ENCODE measurements at regions of chr7 and their contacts with region 1.

Region 1: DNA sequence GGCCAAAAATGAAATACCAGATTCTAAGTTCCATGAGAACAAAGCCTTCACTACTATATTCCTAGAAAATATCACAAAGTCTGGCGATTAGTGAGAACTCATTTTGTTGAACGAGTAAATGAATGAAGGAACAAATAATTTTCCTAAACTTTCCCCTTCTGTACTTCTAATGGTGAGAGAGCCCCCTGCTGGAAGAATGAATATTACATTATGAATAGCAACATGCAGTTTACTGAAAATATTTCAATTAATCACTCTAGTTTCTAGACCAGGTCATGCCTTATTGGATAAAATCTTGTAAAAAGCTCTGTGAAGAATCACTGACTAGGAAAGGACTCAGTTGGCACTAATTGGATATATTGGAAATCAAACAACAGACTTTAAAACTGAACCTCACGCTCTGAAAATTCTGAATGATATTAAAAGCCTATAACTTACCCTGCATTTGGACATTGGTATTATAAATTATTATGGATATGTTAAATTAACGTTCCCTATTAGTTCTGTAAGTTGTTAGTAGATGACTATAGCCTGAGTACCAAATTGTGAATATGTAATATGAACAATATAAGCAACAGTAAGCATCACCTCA is 32.4 kb upstream of the MTPN start:
- DNase-seq: no peak
- H3K4me3 ChIP-seq: no peak overlapping the region
- H3K27ac ChIP-seq: no peak overlapping the region
- H3K4me1 ChIP-seq: peaks cover 4% of the 10 kb centered on the region
- H3K27me3 ChIP-seq: no peaks in the 10 kb centered on the region
- CTCF ChIP-seq: peak; percentile 83

Region 2: GRCh38 chr7:135801045-135801693 is 208.4 kb before region 1 on chr7:
- intact Hi-C with region 1: loop called (anchors 2 kb)
- DNase-seq: no peak
- H3K4me3 ChIP-seq: peak overlapping the region; percentile 14
- H3K27ac ChIP-seq: no peak overlapping the region
- H3K4me1 ChIP-seq: peaks cover 26% of the 10 kb centered on the region
- H3K27me3 ChIP-seq: no peaks in the 10 kb centered on the region
- CTCF ChIP-seq: peak; percentile 91

Region 3: DNA sequence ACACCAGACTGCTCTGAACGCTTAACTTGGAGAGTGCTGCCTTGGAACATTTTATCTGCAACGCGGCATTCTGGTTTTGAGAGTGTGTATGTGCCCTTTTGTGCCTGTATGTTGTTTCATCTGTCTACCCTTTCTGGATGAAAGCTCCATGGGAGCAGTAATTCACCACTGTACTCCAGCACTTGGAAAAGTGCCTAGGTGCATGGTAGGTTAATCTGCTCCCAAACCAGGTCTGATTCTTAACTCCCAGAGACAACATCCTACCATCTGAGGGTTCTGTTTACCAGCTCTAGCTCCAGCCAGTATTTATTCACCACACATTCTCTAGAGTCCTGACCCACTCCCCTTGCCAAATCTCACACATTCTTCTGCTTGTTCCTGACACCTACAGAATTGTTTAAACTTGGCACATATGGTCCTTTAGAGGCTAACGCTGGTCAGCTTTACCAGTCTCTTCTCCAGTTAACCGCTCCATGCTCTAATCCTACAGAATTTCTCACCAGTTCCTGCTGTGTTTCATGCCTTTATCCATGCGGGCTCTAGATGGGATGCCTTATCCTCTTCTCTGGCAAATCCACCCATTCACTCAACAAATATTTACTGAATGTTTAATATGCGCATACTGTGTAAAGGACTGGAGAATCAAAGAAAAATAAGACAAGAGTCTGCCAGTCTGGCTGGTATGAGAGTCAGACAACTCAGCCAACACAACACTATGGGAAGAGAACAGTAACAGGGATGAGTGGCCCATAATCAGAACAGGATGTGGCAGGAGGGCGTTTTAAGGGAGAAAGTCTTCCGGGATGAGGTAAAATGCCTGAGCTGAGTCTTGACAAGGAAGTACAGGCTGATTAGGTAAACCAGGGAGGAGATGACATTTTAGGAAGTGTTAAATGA is 78.8 kb before region 1 on chr7:
- intact Hi-C with region 1: no loop called
- DNase-seq: no peak
- H3K4me3 ChIP-seq: peak overlapping the region; percentile 37
- H3K27ac ChIP-seq: peak overlapping the region; percentile 82
- H3K4me1 ChIP-seq: peaks cover 90% of the 10 kb centered on the region
- H3K27me3 ChIP-seq: no peaks in the 10 kb centered on the region
- CTCF ChIP-seq: no peak

Region 4: GRCh38 chr7:135970682-135971365 is 38.8 kb before region 1 on chr7:
- intact Hi-C with region 1: no loop called
- DNase-seq: no peak
- H3K4me3 ChIP-seq: no peak overlapping the region
- H3K27ac ChIP-seq: no peak overlapping the region
- H3K4me1 ChIP-seq: peaks cover 70% of the 10 kb centered on the region
- H3K27me3 ChIP-seq: no peaks in the 10 kb centered on the region
- CTCF ChIP-seq: no peak

Region 5: DNA sequence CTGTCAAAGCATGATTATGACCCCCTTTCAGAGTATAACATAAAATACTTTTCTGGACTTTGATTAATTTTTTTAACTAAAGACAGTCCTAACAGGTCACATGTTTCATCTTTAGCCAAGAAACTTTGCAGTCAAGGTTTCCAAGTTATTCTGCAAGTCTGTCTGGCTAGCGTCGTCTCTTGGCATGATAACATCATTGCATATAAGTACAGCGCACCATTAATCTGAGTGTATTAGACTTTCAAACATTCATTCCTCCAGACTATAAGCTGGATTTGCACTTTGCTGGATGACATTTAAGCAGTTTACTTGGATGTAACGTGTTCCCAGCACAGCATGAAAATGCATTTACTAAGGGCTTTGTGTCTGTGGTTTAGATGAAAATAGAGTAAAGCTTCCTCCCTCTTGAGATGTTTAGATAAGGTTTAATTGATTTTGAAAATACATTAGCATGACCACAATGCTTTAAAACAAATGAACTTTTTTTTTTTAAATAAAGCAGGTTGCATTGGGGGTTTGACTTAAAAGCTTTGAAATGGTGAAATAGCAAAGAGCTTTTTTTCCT is 316.5 kb after region 1 on chr7:
- intact Hi-C with region 1: no loop called
- DNase-seq: no peak
- H3K4me3 ChIP-seq: no peak overlapping the region
- H3K27ac ChIP-seq: no peak overlapping the region
- H3K4me1 ChIP-seq: no peaks in the 10 kb centered on the region
- H3K27me3 ChIP-seq: peaks cover 4% of the 10 kb centered on the region
- CTCF ChIP-seq: no peak

Measured in left ventricle myocardium inferior (tissue), 1 donor.